ENCODE measurements at regions of chr12 and their contacts with region 1.

Region 1: GRCh38 chr12:108514973-108515814 is at the start of gene FICD:
- DNase-seq: peak; percentile 99 to 100
- H3K4me3 ChIP-seq: peak within 1 kb of the TSS; percentile 80 to 97
- H3K27ac ChIP-seq: peak within 1 kb of the TSS; percentile 71 to 76
- H3K4me1 ChIP-seq: peaks cover 6 to 10% of the 10 kb centered on the region in 2 donors
- H3K27me3 ChIP-seq: no peaks in the 10 kb centered on the region
- CTCF ChIP-seq: no peak
- total RNA-seq, gene FICD: 30.8 TPM

Region 2: GRCh38 chr12:107685360-107686248 is 829.6 kb before region 1 on chr12 and contains the start of gene PWP1:
- intact Hi-C with region 1: loop called (anchors 10 kb)
- DNase-seq: peak; percentile 75 to 97
- H3K4me3 ChIP-seq: peak within 1 kb of the TSS; percentile 95
- H3K27ac ChIP-seq: peak within 1 kb of the TSS; percentile 66 to 72
- H3K4me1 ChIP-seq: peaks cover 0 to 10% of the 10 kb centered on the region in 2 donors
- H3K27me3 ChIP-seq: no peaks in the 10 kb centered on the region
- CTCF ChIP-seq: no peak
- total RNA-seq, gene PWP1: 57.3 TPM

Region 3: GRCh38 chr12:108099073-108099472 is 416.1 kb before region 1 on chr12:
- intact Hi-C with region 1: loop called (anchors 5 kb)
- DNase-seq: no peak
- H3K4me3 ChIP-seq: no peak overlapping the region
- H3K27ac ChIP-seq: no peak overlapping the region
- H3K4me1 ChIP-seq: no peaks in the 10 kb centered on the region
- H3K27me3 ChIP-seq: no peaks in the 10 kb centered on the region
- CTCF ChIP-seq: peak; percentile 29 to 60 (median 35)

Region 4: DNA sequence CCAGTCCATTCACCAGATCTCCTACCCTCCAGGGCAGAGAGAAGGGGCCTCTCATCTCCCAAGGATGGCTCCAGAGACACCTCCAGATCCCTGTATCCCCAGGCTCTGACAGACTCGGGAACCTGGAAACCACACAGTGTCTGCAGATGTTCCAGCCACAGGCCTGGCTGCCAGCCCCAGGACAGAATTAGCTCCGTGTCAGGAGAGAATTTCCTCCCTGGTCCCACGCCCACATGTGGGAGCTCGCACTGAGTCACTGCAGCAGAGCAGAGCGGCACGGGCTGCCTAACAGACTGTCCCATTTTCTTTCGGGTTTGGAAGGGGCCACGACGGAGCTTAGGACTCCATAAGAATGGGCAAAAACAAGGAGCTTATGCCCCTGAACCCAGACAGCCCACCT is 209.7 kb before region 1 on chr12:
- intact Hi-C with region 1: loop called (anchors 5 kb)
- DNase-seq: peak; percentile 80 to 96
- H3K4me3 ChIP-seq: peak overlapping the region; percentile 39 to 48
- H3K27ac ChIP-seq: peak overlapping the region; percentile 90 to 91
- H3K4me1 ChIP-seq: peaks cover 31 to 64% of the 10 kb centered on the region in 2 donors
- H3K27me3 ChIP-seq: no peaks in the 10 kb centered on the region
- CTCF ChIP-seq: no peak

Region 5: DNA sequence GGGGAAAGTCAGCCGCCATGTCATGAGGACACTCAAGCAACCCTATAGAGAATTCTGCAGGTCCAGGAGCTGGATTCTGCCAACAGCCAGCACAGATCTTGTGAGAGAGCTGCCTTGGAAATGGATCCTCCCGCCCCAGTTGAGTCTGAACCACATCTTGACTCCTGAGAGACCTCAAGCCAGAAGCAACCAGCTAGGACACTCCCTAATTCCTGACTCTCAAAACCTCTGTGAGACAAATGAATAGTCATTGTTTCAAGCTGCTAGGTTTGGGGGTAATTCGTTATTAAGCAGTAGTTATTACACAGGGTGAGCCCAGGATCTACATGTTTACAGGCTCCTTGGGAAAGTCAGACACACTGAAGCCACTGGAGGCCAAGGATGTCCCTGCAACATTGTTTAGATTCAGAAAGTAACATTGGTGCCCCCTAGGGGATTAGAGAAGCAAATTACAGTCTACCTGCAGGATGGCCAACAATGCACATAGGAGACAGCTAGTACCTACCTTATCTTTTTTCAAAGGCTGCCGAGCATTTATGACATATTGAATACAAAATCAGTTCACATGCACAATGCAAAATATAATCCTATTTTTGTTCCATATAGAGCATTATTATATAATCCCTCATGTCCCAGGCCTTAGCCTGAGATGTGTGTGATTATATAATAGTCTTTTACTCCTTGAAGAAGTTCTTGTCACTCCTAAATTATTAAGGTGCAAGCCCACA is 58.0 kb before region 1 on chr12:
- intact Hi-C with region 1: loop called (anchors 2 kb)
- DNase-seq: no peak
- H3K4me3 ChIP-seq: no peak overlapping the region
- H3K27ac ChIP-seq: no peak overlapping the region
- H3K4me1 ChIP-seq: no peaks in the 10 kb centered on the region
- H3K27me3 ChIP-seq: no peaks in the 10 kb centered on the region
- CTCF ChIP-seq: peak; percentile 47 to 77 (median 66)

Region 6: GRCh38 chr12:108542320-108542719 is 27.1 kb after region 1 on chr12:
- intact Hi-C with region 1: no loop called
- DNase-seq: no peak
- H3K4me3 ChIP-seq: no peak overlapping the region
- H3K27ac ChIP-seq: no peak overlapping the region
- H3K4me1 ChIP-seq: no peaks in the 10 kb centered on the region
- H3K27me3 ChIP-seq: no peaks in the 10 kb centered on the region
- CTCF ChIP-seq: no peak

Region 7: DNA sequence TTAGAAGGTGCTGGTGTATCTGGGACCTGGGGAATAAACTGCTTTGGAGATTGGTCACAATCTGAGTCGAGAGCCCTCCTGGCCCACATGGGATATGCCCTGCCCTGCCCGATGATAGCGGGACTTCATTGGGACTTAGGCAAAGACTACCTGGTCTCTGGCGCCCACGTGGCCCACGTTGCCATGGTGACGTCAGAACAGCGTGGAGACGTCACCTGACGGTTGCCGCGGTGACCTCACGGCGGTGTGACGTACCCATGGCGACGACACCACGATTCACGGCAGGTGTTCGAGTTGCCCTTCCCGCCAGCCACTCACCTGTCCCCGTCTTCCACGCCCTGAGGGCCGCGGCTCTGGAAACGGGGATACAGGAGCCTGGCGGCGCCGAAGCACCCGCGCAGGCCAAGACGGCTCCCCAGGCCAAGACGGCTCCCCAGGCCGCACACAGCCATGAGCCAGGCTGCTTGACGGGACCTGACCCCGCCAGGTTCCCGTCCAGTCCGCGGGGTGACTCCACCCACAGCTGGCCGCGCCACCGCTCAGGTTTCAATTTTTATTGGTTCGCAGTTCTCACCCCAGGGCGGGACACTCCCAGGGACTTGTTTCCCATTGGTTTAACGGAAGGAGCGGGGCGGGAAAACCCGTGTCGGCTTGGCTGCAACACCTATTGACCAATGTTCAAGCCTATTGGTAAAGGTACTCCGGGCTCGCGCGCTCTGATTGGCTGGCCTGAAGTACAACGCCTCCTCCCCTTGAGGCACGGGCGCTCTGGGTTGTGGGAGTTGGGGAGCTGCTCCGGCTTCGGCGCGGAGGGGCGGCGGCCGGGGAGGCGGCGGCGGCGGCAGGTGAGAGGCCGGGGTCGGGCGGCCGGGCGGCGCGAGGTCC is 1058.1 kb after region 1 on chr12 and contains the starts of genes MMAB and MVK:
- intact Hi-C with region 1: loop called (anchors 10 kb)
- DNase-seq: peak; percentile 99 to 100
- H3K4me3 ChIP-seq: peak within 1 kb of the TSS; percentile 68 to 78
- H3K27ac ChIP-seq: peak within 1 kb of the TSS; percentile 64 to 78
- H3K4me1 ChIP-seq: peaks cover 0 to 12% of the 10 kb centered on the region in 2 donors
- H3K27me3 ChIP-seq: no peaks in the 10 kb centered on the region
- CTCF ChIP-seq: no peak
- total RNA-seq, gene MMAB: 43.5 TPM
- total RNA-seq, gene MVK: 53.1 TPM

Measured in ascending aorta (tissue), 2 donors.